ENCODE measurements at regions of chr2 and their contacts with region 1.

Region 1: DNA sequence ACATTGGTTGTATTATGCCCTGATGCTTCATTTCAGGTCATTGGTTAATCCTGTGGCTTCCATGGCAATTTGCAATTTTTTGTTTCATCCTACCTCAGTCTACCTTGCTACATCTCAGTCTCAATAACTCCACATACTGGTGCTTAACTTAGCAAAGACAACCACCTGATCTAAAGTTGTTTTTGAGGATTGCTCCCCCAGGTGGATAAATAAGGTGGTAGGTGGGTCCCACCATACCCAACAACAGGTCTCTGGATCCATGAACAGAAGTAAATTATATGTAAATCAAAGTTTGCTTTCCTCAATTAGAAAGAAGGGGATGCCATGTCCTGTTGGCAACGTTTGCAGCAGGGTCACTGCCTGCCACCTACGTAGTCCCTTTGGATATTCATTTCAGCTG is 7.0 kb downstream of the XIRP2 start:
- DNase-seq: no peak
- ATAC-seq: no peak
- H3K4me3 ChIP-seq: no peak overlapping the region
- H3K27ac ChIP-seq: no peak overlapping the region
- H3K4me1 ChIP-seq: no peaks in the 10 kb centered on the region
- H3K27me3 ChIP-seq: peaks cover 0 to 4% (median 0%) of the 10 kb centered on the region in 7 donors
- CTCF ChIP-seq: no peak

Region 2: DNA sequence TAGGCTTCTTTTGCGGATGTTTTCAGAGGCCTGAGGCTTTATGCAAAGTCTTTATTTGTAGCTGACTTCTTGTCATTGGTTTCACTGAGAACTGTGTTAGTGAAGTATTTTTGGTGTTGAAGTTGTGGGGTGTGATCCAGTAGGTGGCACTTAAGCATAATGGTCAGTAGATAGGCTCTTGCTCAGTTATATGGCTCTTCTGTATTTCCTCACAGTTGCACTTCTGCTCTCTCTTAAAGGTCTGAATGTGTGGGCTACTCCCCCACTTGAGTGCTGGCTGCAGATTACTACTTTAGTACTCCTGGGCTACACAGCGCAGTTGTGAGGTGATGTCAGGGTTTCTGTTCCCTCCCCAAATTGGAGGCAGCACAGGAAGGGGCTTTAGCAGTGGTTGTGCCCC is 267.4 kb before region 1 on chr2:
- intact Hi-C with region 1: loop called in 1 of 10 experiments (anchors 10 kb)
- DNase-seq: no peak
- ATAC-seq: peak in 5 of 8 donors; percentile 67 to 84 (median 81)
- H3K4me3 ChIP-seq: no peak overlapping the region
- H3K27ac ChIP-seq: no peak overlapping the region
- H3K4me1 ChIP-seq: peaks cover 0 to 8% (median 0%) of the 10 kb centered on the region in 9 donors
- H3K27me3 ChIP-seq: no peaks in the 10 kb centered on the region
- CTCF ChIP-seq: peak in 4 of 9 donors; percentile 20 to 44 (median 35)